CD14-positive monocyte (primary cell): ENCODE measurements at regions of chr1 and their contacts with region 1.

Region 1: DNA sequence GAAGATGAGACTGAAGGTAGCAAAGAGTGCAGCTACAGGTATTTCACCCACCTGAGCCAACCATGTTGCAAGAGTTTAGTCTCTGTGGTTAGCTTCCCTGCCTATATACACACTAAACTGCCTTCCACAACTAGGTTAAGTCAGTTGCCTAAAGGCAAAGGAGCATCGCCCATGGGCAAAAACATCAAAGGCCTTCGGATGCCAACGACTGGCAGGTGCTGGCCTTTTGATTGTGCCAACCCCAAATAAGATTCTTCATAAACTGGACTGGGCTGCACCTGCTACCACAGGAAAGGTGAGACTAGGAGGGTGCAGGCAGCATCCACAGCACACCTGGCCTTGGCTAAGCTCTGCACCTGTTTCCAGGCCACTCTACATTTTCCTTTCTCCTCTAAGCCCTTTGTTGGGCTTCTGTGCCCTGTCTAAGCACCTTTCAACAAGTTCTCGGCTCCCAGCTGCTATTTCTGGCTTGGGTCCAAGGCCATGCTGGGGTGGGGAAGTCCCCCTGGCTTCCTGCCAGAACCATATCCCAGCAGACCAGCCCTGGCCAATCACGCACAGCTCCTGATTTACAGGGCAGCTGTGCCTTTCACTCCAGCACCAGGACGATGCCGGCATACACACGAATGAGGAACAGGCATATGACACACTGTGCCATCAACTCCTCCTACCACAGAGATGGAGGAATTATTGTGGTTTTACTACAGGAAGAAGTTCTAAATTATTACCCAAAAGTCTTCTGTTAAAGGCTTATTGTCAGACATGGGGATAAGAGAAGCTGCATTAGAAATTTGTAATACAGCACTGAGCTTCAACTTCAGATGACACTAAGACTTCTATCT is 37.8 kb downstream of the TRIT1 start:
- DNase-seq: peak; percentile 98 to 99 (median 99)
- H3K4me3 ChIP-seq: peak overlapping the region in 1 of 3 experiments; percentile 43
- H3K4me3 Mint-ChIP-seq: peak overlapping the region; percentile 28 to 75
- H3K27ac ChIP-seq: peak overlapping the region; percentile 75 to 89
- H3K27ac Mint-ChIP-seq: peak overlapping the region; percentile 93 to 99 (median 94)
- H3K4me1 ChIP-seq: peaks cover 56 to 60% of the 10 kb centered on the region in 2 donors
- H3K4me1 Mint-ChIP-seq: peaks cover 55% of the 10 kb centered on the region
- H3K27me3 ChIP-seq: no peaks in the 10 kb centered on the region
- H3K27me3 Mint-ChIP-seq: no peaks in the 10 kb centered on the region
- CTCF ChIP-seq: no peak

Region 2: GRCh38 chr1:39886757-39887231 is 41.3 kb after region 1 on chr1:
- intact Hi-C with region 1: loop called in 1 of 2 experiments (anchors 2 kb)
- DNase-seq: peak in 1 of 3 donors; percentile 30
- H3K4me3 ChIP-seq: no peak overlapping the region
- H3K4me3 Mint-ChIP-seq: no peak overlapping the region
- H3K27ac ChIP-seq: no peak overlapping the region
- H3K27ac Mint-ChIP-seq: peak overlapping the region in 1 of 7 donors; percentile 48
- H3K4me1 ChIP-seq: peaks cover 45 to 57% of the 10 kb centered on the region in 2 donors
- H3K4me1 Mint-ChIP-seq: peaks cover 37% of the 10 kb centered on the region
- H3K27me3 ChIP-seq: no peaks in the 10 kb centered on the region
- H3K27me3 Mint-ChIP-seq: peaks cover 0 to 7% (median 2%) of the 10 kb centered on the region in 3 donors
- CTCF ChIP-seq: no peak